Naive thymus-derived CD8-positive, alpha-beta T cell (primary cell): ENCODE measurements at regions of chr10 and their contacts with region 1.

Region 1: DNA sequence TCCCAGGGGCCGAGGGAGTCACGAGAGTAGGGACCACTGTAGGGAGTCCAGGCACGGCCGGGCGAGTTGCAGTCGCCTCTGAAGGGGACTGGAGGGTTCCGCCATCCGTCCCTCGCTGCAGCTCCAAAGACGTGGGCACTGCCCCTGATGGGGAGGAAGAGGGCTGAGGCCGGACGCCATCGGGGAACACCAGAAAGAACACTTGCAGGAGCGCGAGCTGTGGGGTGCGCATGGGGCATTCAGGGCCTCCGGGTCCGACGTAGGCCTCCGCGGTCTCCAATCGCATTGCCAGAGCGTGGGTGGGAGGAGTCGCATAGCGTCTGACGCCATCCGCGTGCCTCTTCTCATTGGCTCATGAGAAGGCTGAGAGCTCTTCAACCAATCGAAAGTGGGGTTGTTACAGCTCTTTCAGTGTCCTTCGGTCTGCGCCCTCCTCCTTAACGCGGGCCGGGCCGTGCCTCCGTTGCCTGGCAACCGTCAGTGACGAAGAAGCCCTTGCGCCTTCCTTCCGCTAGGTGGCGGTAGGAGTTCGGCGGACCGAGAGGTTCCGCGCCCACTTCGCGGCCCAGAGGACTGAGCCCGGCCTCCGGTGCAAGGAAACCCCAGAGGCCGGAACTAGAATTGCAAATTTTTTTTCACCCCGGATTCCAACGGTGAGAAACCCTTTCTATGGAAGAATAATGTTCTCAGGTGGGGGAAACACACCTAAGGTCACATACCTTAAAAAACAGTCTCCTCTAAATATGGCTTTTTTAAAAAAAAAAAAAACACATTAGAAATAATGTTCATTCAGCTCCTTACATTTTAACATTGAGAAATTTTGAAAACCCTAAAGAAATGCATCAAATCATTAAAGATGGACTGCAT is at the start of gene TCTN3:
- DNase-seq: peak; percentile 85 to 99 (median 97)
- ATAC-seq: peak; percentile 95 to 96
- H3K4me3 Mint-ChIP-seq: peak within 1 kb of the TSS; percentile 95 to 99 (median 96)
- H3K27ac Mint-ChIP-seq: peak within 1 kb of the TSS; percentile 89 to 99 (median 98)
- H3K4me1 Mint-ChIP-seq: peaks cover 20 to 59% (median 46%) of the 10 kb centered on the region in 4 donors
- H3K27me3 Mint-ChIP-seq: peaks cover 0 to 10% (median 3%) of the 10 kb centered on the region in 5 donors
- polyA plus RNA-seq, gene TCTN3: 48.8 to 65.7 (median 54.9) TPM

Region 2: GRCh38 chr10:95656291-95657164 is 37.4 kb before region 1 on chr10 and contains the start of gene ALDH18A1:
- POLR2A ChIA-PET with region 1: interaction called, 10 read pairs
- DNase-seq: peak; percentile 87 to 96 (median 94)
- ATAC-seq: peak; percentile 90 to 92
- H3K4me3 Mint-ChIP-seq: peak within 1 kb of the TSS; percentile 93 to 100 (median 99)
- H3K27ac Mint-ChIP-seq: peak within 1 kb of the TSS; percentile 58 to 98 (median 95)
- H3K4me1 Mint-ChIP-seq: peaks cover 18 to 33% (median 26%) of the 10 kb centered on the region in 4 donors
- H3K27me3 Mint-ChIP-seq: no peaks in the 10 kb centered on the region
- polyA plus RNA-seq, gene ALDH18A1: 48.5 to 61.4 (median 53.1) TPM

Region 3: GRCh38 chr10:95742485-95742884 is 48.6 kb after region 1 on chr10:
- POLR2A ChIA-PET with region 1: no interaction called
- DNase-seq: no peak
- ATAC-seq: no peak
- H3K4me3 Mint-ChIP-seq: peak overlapping the region in 1 of 10 donors; percentile 66
- H3K27ac Mint-ChIP-seq: peak overlapping the region in 2 of 10 donors; percentile 27
- H3K4me1 Mint-ChIP-seq: peaks cover 3 to 15% (median 5%) of the 10 kb centered on the region in 4 donors
- H3K27me3 Mint-ChIP-seq: peaks cover 0 to 16% (median 10%) of the 10 kb centered on the region in 5 donors

Region 4: GRCh38 chr10:96089670-96090462 is 396.0 kb after region 1 on chr10:
- POLR2A ChIA-PET with region 1: interaction called, 10 read pairs
- DNase-seq: peak; percentile 84 to 96 (median 92)
- ATAC-seq: peak; percentile 85 to 89
- H3K4me3 Mint-ChIP-seq: peak overlapping the region; percentile 87 to 97 (median 95)
- H3K27ac Mint-ChIP-seq: peak overlapping the region; percentile 97 to 99 (median 99)
- H3K4me1 Mint-ChIP-seq: peaks cover 3 to 17% (median 10%) of the 10 kb centered on the region in 4 donors
- H3K27me3 Mint-ChIP-seq: peaks cover 16 to 36% (median 25%) of the 10 kb centered on the region in 5 donors

Region 5: GRCh38 chr10:96129387-96130325 is 435.8 kb after region 1 on chr10 and contains the start of gene ZNF518A:
- POLR2A ChIA-PET with region 1: interaction called, 15 read pairs
- DNase-seq: peak; percentile 70 to 98 (median 88)
- ATAC-seq: peak; percentile 81 to 83
- H3K4me3 Mint-ChIP-seq: peak within 1 kb of the TSS; percentile 85 to 98 (median 94)
- H3K27ac Mint-ChIP-seq: peak within 1 kb of the TSS; percentile 94 to 100 (median 99)
- H3K4me1 Mint-ChIP-seq: peaks cover 5 to 24% (median 22%) of the 10 kb centered on the region in 4 donors
- H3K27me3 Mint-ChIP-seq: peaks cover 14 to 41% (median 39%) of the 10 kb centered on the region in 5 donors
- polyA plus RNA-seq, gene ZNF518A: 7.6 to 11.2 (median 10.2) TPM